Breast epithelium (tissue), 4 donors: ENCODE measurements at regions of chrX and their contacts with region 1.

Region 1: DNA sequence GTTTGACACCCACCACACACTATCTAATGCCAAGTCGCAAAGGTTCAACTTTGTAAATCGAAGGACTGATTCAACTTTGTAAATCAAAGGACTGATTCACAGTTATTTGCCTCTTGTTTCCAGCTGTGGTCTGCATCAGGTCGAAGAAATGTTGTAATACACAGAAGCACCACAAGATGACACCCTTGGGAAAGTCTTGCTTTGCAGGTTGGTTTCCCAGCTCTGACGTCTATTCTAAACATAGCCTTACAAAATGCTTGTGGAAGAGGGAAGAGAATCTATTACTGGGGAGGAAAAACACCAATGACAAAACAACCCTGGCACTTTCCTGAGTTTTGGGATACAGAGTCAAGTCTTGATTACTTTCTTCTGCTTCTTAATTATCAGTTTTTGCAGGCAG is 35.3 kb downstream of the SUPT20HL1 start:
- DNase-seq: peak in 1 of 2 donors; percentile 33
- H3K4me3 ChIP-seq: no peak overlapping the region
- H3K27ac ChIP-seq: peak overlapping the region in 1 of 2 donors; percentile 48
- H3K4me1 ChIP-seq: no peaks in the 10 kb centered on the region
- H3K27me3 ChIP-seq: peaks cover 0 to 38% of the 10 kb centered on the region in 2 donors
- CTCF ChIP-seq: peak; percentile 73 to 86 (median 76)
- POLR2A ChIP-seq: no peak

Region 2: DNA sequence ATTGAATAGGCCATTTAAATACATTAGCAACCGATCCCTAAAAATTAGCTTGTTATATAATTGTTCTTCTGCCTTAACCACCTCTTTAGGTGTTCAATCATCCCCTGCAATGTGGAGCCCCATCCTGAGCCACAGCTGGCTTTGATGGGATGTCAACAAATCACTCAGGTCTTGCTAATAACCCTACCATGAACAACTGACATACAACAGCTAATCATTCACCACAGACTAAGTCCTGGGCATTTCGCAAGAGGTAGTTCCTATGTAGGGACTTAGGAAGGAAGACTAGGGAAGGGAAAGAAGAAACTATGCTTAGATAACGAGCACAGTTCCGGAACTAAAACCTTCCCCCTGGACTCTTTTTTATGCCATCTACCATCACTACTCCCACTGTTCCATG is 1124.8 kb before region 1 on chrX:
- intact Hi-C with region 1: no loop called
- DNase-seq: no peak
- H3K4me3 ChIP-seq: no peak overlapping the region
- H3K27ac ChIP-seq: no peak overlapping the region
- H3K4me1 ChIP-seq: no peaks in the 10 kb centered on the region
- H3K27me3 ChIP-seq: peaks cover 0 to 25% of the 10 kb centered on the region in 2 donors
- CTCF ChIP-seq: no peak
- POLR2A ChIP-seq: no peak

Region 3: DNA sequence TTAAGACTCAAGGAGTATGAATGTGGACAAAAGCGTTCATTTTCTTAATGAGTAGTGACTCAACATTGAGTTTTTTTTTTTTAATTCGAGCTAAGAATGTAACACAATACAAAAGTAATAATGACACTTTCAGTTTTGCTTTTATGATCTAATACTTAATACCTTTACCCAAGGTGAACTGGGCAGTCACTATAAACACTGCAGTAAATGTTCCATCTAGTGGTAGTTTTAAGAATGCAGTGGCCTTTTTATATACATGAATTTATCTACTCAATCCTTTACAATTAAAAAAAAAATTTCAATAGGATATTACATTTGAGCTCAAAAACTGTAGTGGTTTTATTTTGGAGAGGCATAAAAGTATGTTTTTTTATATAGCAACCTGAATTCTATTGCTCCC is 103.2 kb after region 1 on chrX:
- intact Hi-C with region 1: loop called (anchors 10 kb)
- DNase-seq: no peak
- H3K4me3 ChIP-seq: no peak overlapping the region
- H3K27ac ChIP-seq: no peak overlapping the region
- H3K4me1 ChIP-seq: no peaks in the 10 kb centered on the region
- H3K27me3 ChIP-seq: peaks cover 0 to 8% of the 10 kb centered on the region in 2 donors
- CTCF ChIP-seq: peak in 2 of 3 donors; percentile 64 to 73
- POLR2A ChIP-seq: no peak